ENCODE measurements at regions of chr12 and their contacts with region 1.

Region 1: GRCh38 chr12:7933255-7933729 is 2.7 kb downstream of the SLC2A3 start:
- DNase-seq: peak; percentile 32 to 90 (median 72)

Region 2: DNA sequence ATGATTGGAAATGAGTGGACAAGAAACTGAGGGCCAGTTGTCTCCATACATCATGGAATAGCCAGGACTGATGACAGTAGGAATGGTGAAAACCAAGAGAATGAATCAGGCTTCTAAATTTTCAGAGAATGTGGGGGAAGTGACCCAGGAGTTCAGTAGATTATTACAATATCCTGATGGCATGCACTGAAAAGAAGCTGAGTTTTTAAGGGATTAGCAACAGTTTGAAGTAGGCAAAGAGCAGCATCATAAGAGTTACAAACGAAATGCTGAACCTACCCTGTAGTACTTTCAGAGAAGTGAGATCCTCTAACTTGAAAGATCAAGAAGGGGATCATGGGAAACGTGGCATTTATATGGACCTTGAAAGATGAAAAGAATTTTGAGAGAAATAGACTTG is 73.7 kb before region 1 on chr12:
- intact Hi-C with region 1: loop called (anchors 5 kb)
- DNase-seq: no peak

Region 3: GRCh38 chr12:7995266-7995963 is 62.1 kb after region 1 on chr12:
- intact Hi-C with region 1: loop called (anchors 5 kb)
- DNase-seq: peak; percentile 67 to 97 (median 87)

Region 4: DNA sequence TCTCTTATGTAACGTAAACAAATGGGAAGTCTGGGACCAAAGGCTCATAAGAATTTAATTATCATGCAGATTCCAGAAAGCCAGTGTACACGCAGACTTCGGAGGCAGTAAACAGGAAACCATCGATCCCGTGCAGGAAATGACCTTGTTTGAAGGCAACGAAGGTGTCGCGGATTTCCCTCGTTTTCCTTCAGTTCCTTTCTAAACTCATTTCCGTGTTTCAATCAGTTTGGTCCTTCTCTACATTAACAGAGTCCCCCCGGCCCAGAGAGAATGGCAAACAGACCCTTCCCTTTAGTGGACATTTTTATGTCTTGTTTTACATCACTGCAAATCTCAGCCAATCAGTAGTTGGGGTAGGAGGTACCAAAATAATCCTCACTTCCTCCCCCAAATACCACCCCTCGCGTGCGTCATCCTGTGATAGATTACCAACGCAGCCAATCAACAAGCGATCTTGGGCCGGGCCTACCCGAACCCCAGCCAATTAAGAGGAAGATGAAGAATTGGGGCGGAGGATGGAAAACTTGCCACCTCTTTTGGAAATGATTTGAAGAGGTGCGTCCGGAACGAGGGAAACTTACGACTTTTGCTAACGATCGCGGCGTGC is 93.1 kb after region 1 on chr12:
- intact Hi-C with region 1: loop called (anchors 10 kb)
- DNase-seq: peak; percentile 91 to 99 (median 98)

Region 5: DNA sequence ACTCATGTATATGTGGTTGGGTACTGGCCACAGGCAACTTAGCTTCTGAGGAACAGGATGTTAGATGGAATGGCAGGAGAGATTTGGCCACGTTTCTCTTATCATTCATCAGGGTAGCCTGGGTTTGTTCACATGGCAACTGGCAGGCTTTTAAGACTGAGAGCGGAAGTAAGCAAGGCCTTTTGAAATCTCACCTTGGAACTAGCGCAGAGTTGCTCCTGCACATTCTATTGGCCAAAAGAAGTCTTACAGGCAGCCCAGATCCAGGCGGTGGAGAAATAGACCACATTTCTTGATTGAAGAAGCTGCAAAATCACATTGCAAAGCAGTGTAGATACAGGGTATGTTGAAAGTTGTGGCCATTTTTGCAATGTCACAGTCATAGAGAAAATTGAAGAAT is 193.8 kb after region 1 on chr12:
- intact Hi-C with region 1: no loop called
- DNase-seq: no peak